Activated CD4-positive, alpha-beta memory T cell treated with anti-CD3 and anti-CD28 coated beads for 36 hours (primary cell): ENCODE measurements at regions of chr9 and their contacts with region 1.

Region 1: DNA sequence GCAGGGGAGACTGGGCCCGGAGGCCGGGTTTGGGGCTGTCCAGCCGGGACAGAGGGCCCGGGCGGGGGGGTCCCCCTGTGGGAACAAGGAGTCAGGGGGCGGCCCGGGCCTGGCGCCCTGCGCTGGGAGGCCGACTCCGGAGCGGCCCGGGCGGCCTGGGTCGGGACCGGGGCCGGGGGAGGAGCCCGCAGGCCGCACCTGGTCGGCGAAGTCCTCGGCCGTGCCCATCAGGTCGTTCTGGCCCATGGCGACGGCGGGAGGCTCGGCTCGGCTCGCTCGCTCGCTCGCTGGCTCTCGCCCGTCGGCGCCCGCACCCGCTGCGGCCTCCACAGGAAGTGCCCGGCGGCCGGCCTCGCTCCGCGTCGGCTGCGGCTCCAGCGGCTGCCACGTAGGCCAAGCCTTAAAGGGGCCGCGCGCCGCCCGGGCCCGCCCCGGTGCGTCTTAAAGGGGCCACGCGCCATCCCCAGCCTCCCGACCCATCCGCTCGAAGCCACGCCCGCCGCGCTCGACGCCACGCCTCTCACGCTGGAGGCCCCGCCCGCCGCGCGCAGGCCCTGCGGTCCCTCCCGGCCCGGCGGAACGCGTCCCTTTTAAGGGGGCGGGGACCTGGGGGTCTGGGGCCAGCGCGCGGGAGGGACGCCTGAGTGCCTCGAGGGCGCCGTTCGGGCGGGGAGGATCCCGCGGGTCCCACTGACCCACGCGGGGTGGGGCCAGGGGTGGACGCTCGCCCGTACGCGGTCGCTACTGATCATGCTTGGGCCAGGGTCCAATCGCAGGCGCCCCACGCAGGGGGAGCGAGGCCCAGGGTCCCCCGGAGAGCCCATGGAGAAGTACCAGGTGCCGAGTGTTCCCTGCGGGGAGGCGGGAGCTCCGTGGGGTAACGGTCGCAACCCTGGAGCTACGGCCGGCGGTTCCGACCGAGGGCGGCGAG is at the starts of genes STKLD1 and SURF4:
- DNase-seq: peak; percentile 97
- H3K4me3 Mint-ChIP-seq: peak within 1 kb of the TSS; percentile 97
- H3K27ac Mint-ChIP-seq: peak within 1 kb of the TSS; percentile 96
- H3K4me1 Mint-ChIP-seq: peaks cover 35% of the 10 kb centered on the region
- H3K27me3 Mint-ChIP-seq: no peaks in the 10 kb centered on the region
- total RNA-seq, gene STKLD1: 0.69 to 0.90 TPM
- total RNA-seq, gene SURF4: 358 to 368 TPM

Region 2: GRCh38 chr9:133290751-133291302 is 85.2 kb before region 1 on chr9:
- CTCF ChIA-PET with region 1: no interaction called
- POLR2A ChIA-PET with region 1: no interaction called
- intact Hi-C with region 1: no loop called
- DNase-seq: no peak
- H3K4me3 Mint-ChIP-seq: no peak overlapping the region
- H3K27ac Mint-ChIP-seq: no peak overlapping the region
- H3K4me1 Mint-ChIP-seq: no peaks in the 10 kb centered on the region
- H3K27me3 Mint-ChIP-seq: peaks cover 20% of the 10 kb centered on the region

Region 3: GRCh38 chr9:133347985-133348717 is 27.8 kb before region 1 on chr9 and contains the starts of genes MED22 and RPL7A:
- CTCF ChIA-PET with region 1: interaction called, 76 read pairs
- POLR2A ChIA-PET with region 1: interaction called, 381 read pairs
- intact Hi-C with region 1: loop called (anchors 1 kb)
- DNase-seq: peak; percentile 96
- H3K4me3 Mint-ChIP-seq: peak within 1 kb of the TSS; percentile 97
- H3K27ac Mint-ChIP-seq: peak within 1 kb of the TSS; percentile 98
- H3K4me1 Mint-ChIP-seq: peaks cover 38% of the 10 kb centered on the region
- H3K27me3 Mint-ChIP-seq: no peaks in the 10 kb centered on the region
- total RNA-seq, gene MED22: 20.8 to 20.9 TPM
- total RNA-seq, gene RPL7A: 3,340 to 3,454 TPM

Region 4: GRCh38 chr9:133406480-133407307 is 30.7 kb after region 1 on chr9:
- CTCF ChIA-PET with region 1: interaction called, 4 read pairs
- POLR2A ChIA-PET with region 1: interaction called, 3 read pairs
- intact Hi-C with region 1: loop called (anchors 1 kb)
- DNase-seq: peak; percentile 92
- H3K4me3 Mint-ChIP-seq: no peak overlapping the region
- H3K27ac Mint-ChIP-seq: peak overlapping the region; percentile 83
- H3K4me1 Mint-ChIP-seq: peaks cover 14% of the 10 kb centered on the region
- H3K27me3 Mint-ChIP-seq: no peaks in the 10 kb centered on the region

Region 5: GRCh38 chr9:133459476-133460404 is 83.8 kb after region 1 on chr9 and contains the start of gene CACFD1:
- CTCF ChIA-PET with region 1: no interaction called
- POLR2A ChIA-PET with region 1: no interaction called
- intact Hi-C with region 1: loop called (anchors 1 kb)
- DNase-seq: peak; percentile 94
- H3K4me3 Mint-ChIP-seq: peak within 1 kb of the TSS; percentile 82
- H3K27ac Mint-ChIP-seq: peak within 1 kb of the TSS; percentile 62
- H3K4me1 Mint-ChIP-seq: peaks cover 7% of the 10 kb centered on the region
- H3K27me3 Mint-ChIP-seq: no peaks in the 10 kb centered on the region
- total RNA-seq, gene CACFD1: 1.1 to 1.2 TPM